IMR-90 (cell line): ENCODE measurements at regions of chr10 and their contacts with region 1.

Region 1: DNA sequence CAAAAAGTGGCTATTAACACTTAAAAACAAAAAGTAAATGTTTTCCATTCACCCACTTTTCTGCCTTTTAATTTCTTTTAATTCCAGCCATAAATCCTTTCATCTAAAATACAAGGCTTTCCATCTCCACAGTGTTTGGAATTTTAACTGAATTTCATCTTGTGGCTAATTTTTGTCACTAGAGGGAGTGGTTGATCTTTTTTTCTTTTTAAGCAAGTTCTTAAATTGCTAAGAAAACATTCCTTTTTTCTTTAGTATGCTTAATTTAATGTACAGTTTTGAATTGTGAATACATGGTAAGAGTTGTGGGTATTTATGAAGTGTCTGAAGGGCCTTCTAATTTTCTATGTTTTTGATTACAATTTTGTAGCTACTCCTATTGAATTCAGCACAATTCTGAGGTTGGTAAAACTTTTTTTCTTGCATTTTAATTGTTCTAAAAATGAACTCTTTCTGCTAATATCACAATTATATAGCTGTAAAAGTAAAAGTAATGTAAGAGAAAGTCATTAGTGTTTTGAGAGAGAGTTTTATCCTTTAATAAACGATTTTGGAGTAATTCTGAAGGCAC is 54.9 kb upstream of the ANK3 start:
- DNase-seq: peak; percentile 63
- ATAC-seq: peak; percentile 65
- H3K4me3 ChIP-seq: no peak overlapping the region
- H3K27ac ChIP-seq: no peak overlapping the region
- H3K4me1 ChIP-seq: peaks cover 3% of the 10 kb centered on the region; the same call in 1 of the 2 replicates
- H3K27me3 ChIP-seq: no peaks in the 10 kb centered on the region; the same call in 1 of the 2 replicates
- CTCF ChIP-seq: peak; percentile 72
- POLR2A ChIP-seq: no peak
- RAD21 ChIP-seq: peak; percentile 70

Region 2: GRCh38 chr10:60099998-60100747 is 344.4 kb before region 1 on chr10:
- CTCF ChIA-PET with region 1: no interaction called
- POLR2A ChIA-PET with region 1: no interaction called
- dilution Hi-C with region 1: no loop called
- in situ Hi-C with region 1: loop called (anchors 5 kb)
- intact Hi-C with region 1: no loop called
- DNase-seq: peak; percentile 63
- ATAC-seq: peak; percentile 63
- H3K4me3 ChIP-seq: no peak overlapping the region
- H3K27ac ChIP-seq: no peak overlapping the region
- H3K4me1 ChIP-seq: peaks cover 1% of the 10 kb centered on the region; the same call in 1 of the 2 replicates
- H3K27me3 ChIP-seq: peaks cover 1% of the 10 kb centered on the region; the same call in 1 of the 2 replicates
- CTCF ChIP-seq: peak; percentile 69
- POLR2A ChIP-seq: no peak
- RAD21 ChIP-seq: peak; percentile 73

Region 3: GRCh38 chr10:60388709-60389301 is 55.8 kb before region 1 on chr10:
- CTCF ChIA-PET with region 1: no interaction called
- POLR2A ChIA-PET with region 1: no interaction called
- dilution Hi-C with region 1: no loop called
- in situ Hi-C with region 1: no loop called
- intact Hi-C with region 1: no loop called
- DNase-seq: no peak
- ATAC-seq: no peak
- H3K4me3 ChIP-seq: no peak overlapping the region
- H3K27ac ChIP-seq: no peak overlapping the region
- H3K4me1 ChIP-seq: peaks cover 5% of the 10 kb centered on the region
- H3K27me3 ChIP-seq: no peaks in the 10 kb centered on the region
- CTCF ChIP-seq: no peak
- POLR2A ChIP-seq: no peak
- RAD21 ChIP-seq: no peak

Region 4: DNA sequence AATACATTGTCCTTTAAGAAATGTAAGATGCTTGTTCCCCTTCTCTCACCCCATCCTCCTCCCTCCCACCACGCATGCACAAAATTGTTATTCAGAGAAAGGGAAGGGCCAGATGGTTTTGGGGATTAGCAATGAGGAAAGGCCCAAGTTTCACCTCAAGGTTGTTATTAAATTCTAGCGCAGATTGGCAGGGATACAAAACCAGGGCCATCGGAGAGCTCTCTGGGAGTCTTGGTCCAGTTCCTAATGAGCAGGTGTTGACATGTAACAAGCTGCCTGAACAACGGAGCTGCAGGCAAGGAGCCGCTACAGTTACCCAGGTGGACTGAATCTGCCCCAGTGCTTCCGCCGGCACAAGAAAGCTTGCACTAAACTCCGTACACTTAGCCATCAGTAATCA is 45.3 kb before region 1 on chr10:
- CTCF ChIA-PET with region 1: no interaction called
- POLR2A ChIA-PET with region 1: no interaction called
- dilution Hi-C with region 1: no loop called
- in situ Hi-C with region 1: no loop called
- intact Hi-C with region 1: no loop called
- DNase-seq: no peak
- ATAC-seq: no peak
- H3K4me3 ChIP-seq: no peak overlapping the region
- H3K27ac ChIP-seq: no peak overlapping the region
- H3K4me1 ChIP-seq: peaks cover 4% of the 10 kb centered on the region
- H3K27me3 ChIP-seq: no peaks in the 10 kb centered on the region
- CTCF ChIP-seq: no peak
- POLR2A ChIP-seq: no peak
- RAD21 ChIP-seq: no peak

Region 5: GRCh38 chr10:60572511-60573194 is 128.1 kb after region 1 on chr10:
- CTCF ChIA-PET with region 1: no interaction called
- POLR2A ChIA-PET with region 1: no interaction called
- dilution Hi-C with region 1: no loop called
- in situ Hi-C with region 1: no loop called
- intact Hi-C with region 1: loop called (anchors 5 kb)
- DNase-seq: peak; percentile 67
- ATAC-seq: peak; percentile 88
- H3K4me3 ChIP-seq: peak overlapping the region; percentile 36; the same call in 1 of the 2 replicates
- H3K27ac ChIP-seq: no peak overlapping the region
- H3K4me1 ChIP-seq: no peaks in the 10 kb centered on the region
- H3K27me3 ChIP-seq: no peaks in the 10 kb centered on the region
- CTCF ChIP-seq: no peak
- POLR2A ChIP-seq: no peak
- RAD21 ChIP-seq: no peak

Region 6: DNA sequence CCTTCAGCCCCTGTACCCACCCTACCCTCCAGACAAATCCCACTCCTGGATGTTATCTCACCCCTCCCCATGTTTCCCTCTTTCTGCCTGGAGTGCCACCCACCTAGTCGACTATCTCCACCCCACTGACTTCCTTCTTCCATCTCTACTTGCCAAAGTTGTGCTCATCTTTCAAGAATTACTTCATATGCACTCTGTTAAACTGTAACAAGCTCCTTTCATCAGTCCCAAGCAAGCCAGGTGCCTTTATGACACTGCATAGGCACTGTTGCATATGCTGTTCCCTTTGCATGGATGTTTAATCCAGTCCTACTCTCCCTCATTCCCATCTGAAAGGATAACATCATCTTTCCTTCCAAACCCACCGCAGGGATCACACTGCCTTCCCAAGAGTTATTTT is 324.8 kb after region 1 on chr10:
- CTCF ChIA-PET with region 1: interaction called, 4 read pairs
- POLR2A ChIA-PET with region 1: no interaction called
- dilution Hi-C with region 1: no loop called
- in situ Hi-C with region 1: no loop called
- intact Hi-C with region 1: loop called (anchors 2 kb)
- DNase-seq: no peak
- ATAC-seq: no peak
- H3K4me3 ChIP-seq: no peak overlapping the region
- H3K27ac ChIP-seq: no peak overlapping the region
- H3K4me1 ChIP-seq: no peaks in the 10 kb centered on the region
- H3K27me3 ChIP-seq: peaks cover 4% of the 10 kb centered on the region
- CTCF ChIP-seq: no peak
- POLR2A ChIP-seq: no peak
- RAD21 ChIP-seq: no peak